CD4-positive, alpha-beta T cell (primary cell): ENCODE measurements at regions of chr15 and their contacts with region 1.

Region 1: GRCh38 chr15:38690689-38691332 is 126.2 kb upstream of the RASGRP1 start:
- DNase-seq: peak; percentile 71 to 93 (median 80)
- ATAC-seq: peak; percentile 34
- H3K4me3 ChIP-seq: no peak overlapping the region
- H3K4me3 Mint-ChIP-seq: peak overlapping the region; percentile 36
- H3K27ac ChIP-seq: peak overlapping the region in 1 of 2 donors; percentile 33
- H3K27ac Mint-ChIP-seq: peak overlapping the region; percentile 89
- H3K4me1 ChIP-seq: peaks cover 72% of the 10 kb centered on the region
- H3K4me1 Mint-ChIP-seq: peaks cover 74% of the 10 kb centered on the region
- H3K27me3 ChIP-seq: no peaks in the 10 kb centered on the region
- H3K27me3 Mint-ChIP-seq: no peaks in the 10 kb centered on the region
- CTCF ChIP-seq: peak; percentile 95

Region 2: DNA sequence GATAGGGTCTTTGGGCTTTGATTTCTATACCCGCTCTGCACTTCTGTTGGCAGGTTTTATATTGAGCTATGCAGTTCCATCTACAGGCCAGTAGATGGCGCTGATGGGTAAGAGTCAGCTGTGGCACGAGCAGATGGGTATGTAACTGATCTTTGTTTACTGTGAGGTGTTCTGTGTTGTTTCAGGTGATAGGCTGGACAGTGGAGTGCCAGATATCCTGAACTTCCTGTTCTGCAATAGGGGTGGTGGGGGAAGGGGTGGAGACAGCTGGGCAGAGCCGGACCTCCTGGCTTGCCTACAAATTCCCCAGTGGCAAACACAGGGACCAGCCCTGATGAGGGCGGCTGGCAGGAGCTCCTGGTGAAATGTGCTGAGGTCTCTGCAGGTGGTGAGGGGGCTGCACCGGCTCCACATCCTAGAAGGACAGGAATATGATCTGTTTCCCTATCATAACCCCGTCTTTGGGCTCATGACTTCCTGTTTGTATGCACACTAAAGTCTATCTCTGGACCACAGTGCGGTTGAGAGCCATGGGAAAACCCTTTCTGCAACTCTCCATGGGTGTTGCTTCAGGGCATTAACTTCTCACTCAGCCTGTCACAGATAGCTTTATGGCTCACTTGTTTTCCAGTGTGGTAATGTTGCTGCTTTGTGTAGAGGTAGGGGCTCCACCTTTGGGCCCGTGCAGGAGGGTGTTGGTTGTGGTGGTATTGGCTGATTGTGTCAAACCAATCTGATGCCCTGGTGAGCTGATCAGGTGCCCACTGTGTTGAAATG is 250.3 kb before region 1 on chr15:
- CTCF ChIA-PET with region 1: interaction called, 15 read pairs
- POLR2A ChIA-PET with region 1: interaction called, 14 read pairs
- intact Hi-C with region 1: no loop called
- DNase-seq: peak; percentile 10 to 88 (median 35)
- ATAC-seq: peak; percentile 96
- H3K4me3 ChIP-seq: no peak overlapping the region
- H3K4me3 Mint-ChIP-seq: no peak overlapping the region
- H3K27ac ChIP-seq: no peak overlapping the region
- H3K27ac Mint-ChIP-seq: no peak overlapping the region
- H3K4me1 ChIP-seq: peaks cover 7% of the 10 kb centered on the region
- H3K4me1 Mint-ChIP-seq: peaks cover 5% of the 10 kb centered on the region
- H3K27me3 ChIP-seq: peaks cover 0 to 7% of the 10 kb centered on the region in 2 experiments
- H3K27me3 Mint-ChIP-seq: peaks cover 37% of the 10 kb centered on the region
- CTCF ChIP-seq: peak; percentile 99

Region 3: GRCh38 chr15:38474155-38474757 is 216.6 kb before region 1 on chr15:
- CTCF ChIA-PET with region 1: interaction called, 15 read pairs
- POLR2A ChIA-PET with region 1: interaction called, 5 read pairs
- intact Hi-C with region 1: loop called (anchors 1 to 2 kb)
- DNase-seq: peak in 10 of 14 experiments; percentile 6 to 85 (median 30)
- ATAC-seq: peak; percentile 100
- H3K4me3 ChIP-seq: no peak overlapping the region
- H3K4me3 Mint-ChIP-seq: no peak overlapping the region
- H3K27ac ChIP-seq: no peak overlapping the region
- H3K27ac Mint-ChIP-seq: peak overlapping the region; percentile 61
- H3K4me1 ChIP-seq: no peaks in the 10 kb centered on the region
- H3K4me1 Mint-ChIP-seq: peaks cover 5% of the 10 kb centered on the region
- H3K27me3 ChIP-seq: no peaks in the 10 kb centered on the region
- H3K27me3 Mint-ChIP-seq: no peaks in the 10 kb centered on the region
- CTCF ChIP-seq: peak; percentile 82

Region 4: DNA sequence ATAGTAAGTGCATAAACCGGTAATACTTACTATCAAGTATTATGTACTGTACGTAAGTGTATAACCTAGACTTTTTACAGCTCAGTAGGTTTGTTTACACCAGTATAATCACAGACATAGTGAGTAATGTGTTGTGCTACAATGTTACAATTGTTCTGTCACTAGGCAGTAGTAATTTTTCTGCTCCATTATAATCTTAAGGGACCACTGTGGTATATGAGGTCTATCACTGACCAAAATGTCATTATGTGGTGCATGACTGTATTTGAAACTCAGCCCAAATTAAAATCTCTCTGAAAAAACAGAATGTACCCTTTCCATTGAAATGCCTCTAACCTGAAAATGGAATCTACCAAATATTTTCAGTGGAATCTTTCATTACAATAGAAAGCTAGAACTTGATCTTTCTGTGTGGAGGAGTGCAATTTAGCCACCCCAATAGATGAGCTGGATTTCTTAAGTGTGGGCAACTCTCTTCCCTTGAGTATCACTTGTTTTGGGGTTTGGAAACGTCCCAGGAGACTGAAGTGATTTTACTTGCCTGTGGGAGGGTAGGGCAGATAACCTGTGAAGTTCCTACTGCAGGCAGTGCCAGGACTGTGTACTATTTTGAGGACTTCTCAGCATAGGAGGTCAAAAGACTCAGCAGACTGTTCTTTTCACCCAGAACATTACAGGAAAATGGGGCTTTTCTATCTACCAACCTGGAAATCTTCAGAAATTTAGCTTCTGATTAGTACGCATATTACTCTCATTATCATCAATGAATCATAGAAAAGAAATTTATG is 185.9 kb before region 1 on chr15:
- CTCF ChIA-PET with region 1: interaction called, 11 read pairs
- POLR2A ChIA-PET with region 1: interaction called, 6 read pairs
- intact Hi-C with region 1: no loop called
- DNase-seq: no peak
- ATAC-seq: no peak
- H3K4me3 ChIP-seq: no peak overlapping the region
- H3K4me3 Mint-ChIP-seq: no peak overlapping the region
- H3K27ac ChIP-seq: no peak overlapping the region
- H3K27ac Mint-ChIP-seq: peak overlapping the region; percentile 79
- H3K4me1 ChIP-seq: no peaks in the 10 kb centered on the region
- H3K4me1 Mint-ChIP-seq: peaks cover 8% of the 10 kb centered on the region
- H3K27me3 ChIP-seq: no peaks in the 10 kb centered on the region
- H3K27me3 Mint-ChIP-seq: no peaks in the 10 kb centered on the region
- CTCF ChIP-seq: no peak

Region 5: GRCh38 chr15:38521316-38521715 is 169.5 kb before region 1 on chr15:
- CTCF ChIA-PET with region 1: interaction called, 15 read pairs
- POLR2A ChIA-PET with region 1: interaction called, 4 read pairs
- intact Hi-C with region 1: no loop called
- DNase-seq: no peak
- ATAC-seq: no peak
- H3K4me3 ChIP-seq: no peak overlapping the region
- H3K4me3 Mint-ChIP-seq: no peak overlapping the region
- H3K27ac ChIP-seq: no peak overlapping the region
- H3K27ac Mint-ChIP-seq: peak overlapping the region; percentile 69
- H3K4me1 ChIP-seq: peaks cover 7% of the 10 kb centered on the region
- H3K4me1 Mint-ChIP-seq: peaks cover 49% of the 10 kb centered on the region
- H3K27me3 ChIP-seq: no peaks in the 10 kb centered on the region
- H3K27me3 Mint-ChIP-seq: no peaks in the 10 kb centered on the region
- CTCF ChIP-seq: no peak

Region 6: DNA sequence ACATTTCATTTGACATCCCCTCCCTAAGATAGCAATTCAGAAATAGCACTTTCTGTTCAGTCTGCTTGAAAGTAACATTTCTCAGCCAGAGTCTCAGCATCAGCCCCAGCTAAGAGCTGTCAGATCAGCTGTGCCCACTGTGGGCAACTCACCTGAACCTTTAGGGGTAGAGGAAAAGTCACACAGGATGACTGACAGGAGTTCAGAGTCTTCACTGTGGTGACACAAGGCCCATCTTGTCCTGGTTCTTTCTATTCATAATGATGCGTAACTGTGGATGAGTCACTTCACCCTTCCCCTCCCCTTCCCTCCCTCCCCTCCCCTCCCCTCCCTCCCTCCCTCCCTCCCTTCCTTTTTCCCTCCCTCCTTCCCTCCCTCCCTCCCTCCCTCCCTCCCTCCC is 30.1 kb before region 1 on chr15:
- CTCF ChIA-PET with region 1: interaction called, 14 read pairs
- POLR2A ChIA-PET with region 1: interaction called, 379 read pairs
- intact Hi-C with region 1: no loop called
- DNase-seq: peak in 7 of 14 experiments; percentile 15 to 70 (median 49)
- ATAC-seq: peak; percentile 58
- H3K4me3 ChIP-seq: no peak overlapping the region
- H3K4me3 Mint-ChIP-seq: peak overlapping the region; percentile 21
- H3K27ac ChIP-seq: no peak overlapping the region
- H3K27ac Mint-ChIP-seq: peak overlapping the region; percentile 78
- H3K4me1 ChIP-seq: peaks cover 42% of the 10 kb centered on the region
- H3K4me1 Mint-ChIP-seq: peaks cover 77% of the 10 kb centered on the region
- H3K27me3 ChIP-seq: no peaks in the 10 kb centered on the region
- H3K27me3 Mint-ChIP-seq: no peaks in the 10 kb centered on the region
- CTCF ChIP-seq: no peak